Left ventricle myocardium inferior (tissue), 1 donor: ENCODE measurements at regions of chr19 and their contacts with region 1.

Region 1: GRCh38 chr19:27974082-27974513 is 1238.9 kb downstream of the UQCRFS1 start:
- DNase-seq: no peak
- H3K4me3 ChIP-seq: no peak overlapping the region
- H3K27ac ChIP-seq: no peak overlapping the region
- H3K4me1 ChIP-seq: no peaks in the 10 kb centered on the region
- H3K27me3 ChIP-seq: peaks cover 41% of the 10 kb centered on the region
- CTCF ChIP-seq: peak; percentile 63

Region 2: DNA sequence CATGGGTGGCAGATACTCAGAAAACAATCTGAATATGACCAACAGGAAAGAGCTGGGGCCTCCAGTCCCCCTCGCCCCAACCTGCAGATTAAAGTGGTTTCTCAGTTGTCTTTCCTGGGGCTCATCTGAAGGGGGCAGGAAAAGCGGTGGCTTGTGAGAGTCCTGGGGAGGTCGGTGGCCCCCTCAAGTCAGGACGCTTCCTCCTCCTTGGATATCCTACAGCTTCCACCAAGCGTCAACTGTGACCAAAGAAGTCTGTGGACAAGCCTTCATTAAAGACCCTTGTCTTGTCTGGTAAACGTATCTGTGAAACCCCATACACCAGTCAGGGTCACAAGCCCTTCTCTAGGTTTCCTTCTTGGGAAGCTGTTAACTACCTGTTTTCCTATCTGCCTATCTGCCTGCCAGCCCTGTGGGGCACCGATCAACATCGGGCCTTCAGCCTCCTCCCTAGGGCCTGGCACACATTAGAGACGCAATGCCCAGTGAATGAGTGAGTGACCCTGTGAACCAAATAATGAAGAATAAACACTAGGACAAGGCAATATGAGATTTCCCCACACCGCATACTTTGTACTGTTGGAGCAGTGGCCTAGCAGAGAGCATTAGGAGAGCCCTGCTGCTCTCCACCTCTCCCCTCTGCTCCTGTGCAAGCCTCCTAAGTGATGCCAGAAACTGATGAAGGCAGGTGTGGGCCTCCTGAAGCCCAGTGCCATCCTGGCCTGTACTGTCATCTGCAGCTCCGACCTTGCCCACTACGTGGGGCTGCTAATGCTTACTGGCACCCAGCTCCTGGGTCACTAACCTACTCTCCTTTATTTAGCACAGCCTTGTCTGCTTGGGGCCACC is 79.0 kb before region 1 on chr19:
- intact Hi-C with region 1: no loop called
- DNase-seq: no peak
- H3K4me3 ChIP-seq: no peak overlapping the region
- H3K27ac ChIP-seq: no peak overlapping the region
- H3K4me1 ChIP-seq: no peaks in the 10 kb centered on the region
- H3K27me3 ChIP-seq: peaks cover 14% of the 10 kb centered on the region
- CTCF ChIP-seq: no peak

Region 3: DNA sequence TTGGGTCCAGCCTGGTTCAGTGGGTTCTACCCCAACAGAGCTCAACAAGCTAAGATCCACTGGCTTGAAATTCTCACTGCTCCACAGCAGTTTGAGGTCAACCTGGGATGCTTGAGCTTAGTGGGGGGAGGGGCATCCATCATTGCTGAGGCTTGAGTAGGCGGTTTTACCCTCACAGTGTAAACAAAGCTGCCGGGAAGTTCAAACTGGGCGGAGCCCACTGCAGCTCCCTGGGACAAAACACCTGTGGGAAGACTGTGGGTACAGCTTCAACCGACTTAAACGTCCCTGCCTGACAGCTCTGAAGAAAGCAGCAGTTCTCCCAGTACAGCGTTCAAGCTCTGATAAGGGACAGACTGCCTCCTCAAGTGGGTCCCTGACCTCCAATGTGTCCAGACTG is 76.9 kb after region 1 on chr19:
- intact Hi-C with region 1: no loop called
- DNase-seq: no peak
- H3K4me3 ChIP-seq: no peak overlapping the region
- H3K27ac ChIP-seq: no peak overlapping the region
- H3K4me1 ChIP-seq: no peaks in the 10 kb centered on the region
- H3K27me3 ChIP-seq: no peaks in the 10 kb centered on the region
- CTCF ChIP-seq: no peak

Region 4: GRCh38 chr19:28324275-28325060 is 350.4 kb after region 1 on chr19:
- intact Hi-C with region 1: loop called (anchors 5 kb)
- DNase-seq: no peak
- H3K4me3 ChIP-seq: no peak overlapping the region
- H3K27ac ChIP-seq: no peak overlapping the region
- H3K4me1 ChIP-seq: no peaks in the 10 kb centered on the region
- H3K27me3 ChIP-seq: peaks cover 21% of the 10 kb centered on the region
- CTCF ChIP-seq: no peak